Posterior vena cava (tissue), 2 donors: ENCODE measurements at regions of chr7 and their contacts with region 1.

Region 1: GRCh38 chr7:71220210-71220695 is 88.3 kb downstream of the GALNT17 start:
- DNase-seq: no peak

Region 2: GRCh38 chr7:69624435-69625230 is 1595.6 kb before region 1 on chr7:
- intact Hi-C with region 1: loop called in 1 of 2 experiments (anchors 5 kb)
- DNase-seq: no peak

Region 3: DNA sequence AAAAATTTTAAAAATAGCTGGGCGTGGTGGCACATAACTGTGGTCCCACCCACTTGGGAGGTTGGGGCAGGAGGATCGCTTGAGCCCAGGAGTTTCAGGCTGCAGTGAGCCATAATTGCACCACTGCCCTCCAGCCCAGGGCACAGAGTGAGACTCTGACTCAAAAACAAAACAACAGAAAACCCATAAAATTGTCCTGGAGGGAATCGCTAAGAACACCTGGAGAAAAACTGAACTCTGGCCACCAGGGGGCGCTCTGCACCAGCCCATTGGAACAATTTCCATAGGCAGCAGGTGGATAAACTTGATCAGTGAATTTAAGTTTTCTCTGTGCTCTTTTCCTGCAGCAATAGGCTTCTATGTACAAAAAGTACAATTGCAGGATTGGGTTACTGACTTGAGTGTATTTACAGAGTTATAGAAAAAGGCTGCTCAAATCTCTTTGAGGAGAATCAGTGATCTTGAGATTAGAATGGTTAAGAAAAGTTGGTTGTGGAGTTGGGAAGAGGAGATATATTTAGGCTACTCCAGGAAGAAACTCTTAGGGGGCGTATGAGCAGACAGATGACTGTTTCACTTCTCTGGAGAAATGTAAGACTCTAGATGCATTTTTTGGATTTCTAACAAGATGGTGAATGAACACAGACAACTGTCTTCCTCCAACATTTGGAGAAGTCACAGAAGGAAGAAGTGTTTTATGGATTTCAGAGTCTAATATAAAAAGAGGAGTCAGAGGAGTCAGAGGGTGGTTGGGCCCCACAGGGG is 363.2 kb before region 1 on chr7:
- intact Hi-C with region 1: no loop called
- DNase-seq: peak; percentile 89